ENCODE measurements at regions of chr7 and their contacts with region 1.

Region 1: DNA sequence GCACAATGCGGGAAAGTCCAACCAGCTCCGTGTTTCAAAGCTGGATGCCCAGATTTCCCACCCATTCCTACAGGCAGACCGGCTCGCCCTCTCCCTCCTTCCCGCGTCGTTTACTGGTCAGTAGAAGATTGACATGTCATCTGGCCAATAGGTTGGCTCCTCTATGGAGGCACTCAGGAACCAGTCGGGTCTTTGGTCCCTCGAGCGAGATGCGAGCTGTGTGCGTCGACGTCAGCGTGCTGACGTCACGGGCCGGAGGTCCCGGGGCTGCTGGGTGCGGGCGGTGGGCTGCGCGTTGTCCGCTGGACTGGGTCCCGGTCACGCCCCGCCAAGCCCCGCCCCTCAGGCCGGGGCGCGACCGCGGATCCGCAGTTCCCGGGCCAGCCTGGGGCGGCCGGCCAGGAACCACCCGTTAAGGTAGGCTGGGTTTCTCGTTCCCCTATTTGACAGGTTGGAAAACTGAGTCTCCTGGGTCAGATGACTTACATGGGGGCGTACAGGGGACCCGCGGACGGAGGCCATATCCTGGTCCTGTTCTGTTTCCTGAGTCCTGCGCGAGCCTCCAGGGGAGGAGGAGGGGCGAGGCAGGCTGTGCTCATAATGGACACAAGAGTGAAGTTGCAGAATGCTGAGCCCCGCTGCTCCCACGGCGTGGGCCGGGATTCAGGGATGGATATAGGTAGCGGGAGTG is at the start of gene STARD3NL:
- DNase-seq: peak; percentile 100
- ATAC-seq: peak; percentile 94
- H3K4me3 ChIP-seq: peak within 1 kb of the TSS; percentile 91
- H3K27ac ChIP-seq: peak within 1 kb of the TSS; percentile 90
- H3K4me1 ChIP-seq: no peaks in the 10 kb centered on the region
- H3K27me3 ChIP-seq: no peaks in the 10 kb centered on the region
- CTCF ChIP-seq: no peak
- EP300 ChIP-seq: no peak
- POLR2A ChIP-seq: peak; percentile 78
- RAD21 ChIP-seq: no peak
- polyA plus RNA-seq, gene STARD3NL: 76.4 to 101 TPM

Region 2: DNA sequence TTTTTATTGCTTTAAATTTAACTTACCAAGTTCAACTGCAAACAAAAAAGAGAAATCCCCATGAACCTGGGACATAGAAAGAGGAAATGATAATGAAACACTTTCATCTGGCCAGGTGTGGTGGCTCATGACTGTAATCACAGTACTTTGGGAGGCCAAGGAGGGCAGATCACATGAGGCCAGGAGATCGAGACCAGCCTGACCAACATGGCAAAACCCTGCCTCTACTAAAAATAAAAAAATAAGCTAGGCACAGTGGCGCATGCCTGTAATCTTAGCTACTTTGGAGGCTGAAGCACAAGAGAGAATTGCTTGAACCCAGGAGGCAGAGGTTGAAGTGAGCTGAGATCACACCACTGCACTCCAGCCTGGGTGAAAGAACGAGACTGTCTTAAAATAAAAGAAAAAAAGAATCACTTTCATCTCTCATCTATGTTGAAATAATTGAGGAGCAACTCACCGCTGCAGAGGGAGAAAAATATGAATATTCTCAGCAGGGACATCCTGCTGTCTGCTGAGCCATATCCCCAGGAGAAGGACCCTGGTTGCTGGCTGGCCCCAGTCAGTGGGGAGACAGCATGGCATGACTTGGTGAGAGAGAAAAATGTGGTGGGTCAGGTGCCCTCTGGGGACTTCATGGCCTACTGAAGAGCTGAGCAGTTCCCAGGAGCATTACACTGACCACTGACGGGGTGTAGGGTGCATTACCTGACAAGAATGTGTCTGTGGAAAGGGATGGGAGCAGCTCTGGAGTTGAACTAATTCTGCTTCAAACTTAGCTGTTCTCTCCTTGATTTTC is 118.1 kb after region 1 on chr7:
- CTCF ChIA-PET with region 1: no interaction called
- POLR2A ChIA-PET with region 1: no interaction called
- RAD21 ChIA-PET with region 1: no interaction called
- SMC1A ChIA-PET with region 1: no interaction called
- in situ Hi-C with region 1: no loop called
- intact Hi-C with region 1: loop called (anchors 5 kb)
- DNase-seq: peak; percentile 43
- ATAC-seq: peak; percentile 84
- H3K4me3 ChIP-seq: peak overlapping the region; percentile 1; the same call in 1 of the 2 replicates
- H3K27ac ChIP-seq: no peak overlapping the region; the same call in 1 of the 2 replicates
- H3K4me1 ChIP-seq: peaks cover 8% of the 10 kb centered on the region
- H3K27me3 ChIP-seq: no peaks in the 10 kb centered on the region
- CTCF ChIP-seq: no peak
- EP300 ChIP-seq: peak in 1 of 2 experiments; percentile 16; a peak in 1 of 4 replicates
- POLR2A ChIP-seq: no peak
- RAD21 ChIP-seq: no peak

Measured in GM12878 (cell line).